Gastrocnemius medialis (tissue), 4 donors: ENCODE measurements at regions of chr10 and their contacts with region 1.

Region 1: DNA sequence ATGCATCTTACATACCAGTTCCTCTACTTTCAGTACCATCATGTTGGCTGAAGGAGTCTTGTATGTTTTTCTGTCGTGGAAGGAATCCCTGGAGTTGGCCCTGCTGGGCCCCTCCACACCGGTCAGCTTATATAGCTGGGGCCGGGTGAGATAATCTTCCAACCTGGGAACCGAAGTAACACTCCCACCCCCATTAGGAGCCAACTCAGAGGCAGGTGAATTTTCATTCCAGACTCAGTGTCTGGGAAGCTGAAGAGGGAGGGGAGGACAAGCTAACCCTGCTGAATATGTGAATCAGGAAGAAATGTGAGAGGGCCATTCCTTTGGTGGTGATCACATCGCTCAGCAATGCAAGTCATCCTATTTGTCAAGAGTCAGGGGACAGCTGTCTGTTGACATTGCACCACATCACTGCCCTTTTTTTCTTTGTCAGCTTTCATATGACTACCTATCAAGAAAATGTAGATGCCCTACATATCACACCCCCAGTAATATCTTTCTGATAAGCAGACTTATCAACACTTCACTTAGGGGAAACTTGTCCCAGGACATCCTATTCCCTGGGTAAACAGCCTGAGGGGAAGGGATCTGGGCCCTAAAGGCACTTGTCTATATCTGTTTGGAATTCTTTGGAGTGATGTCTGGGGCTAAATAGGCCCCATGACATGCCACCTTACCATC is at the start of gene ANKRD1:
- DNase-seq: peak; percentile 69 to 88
- ATAC-seq: peak; percentile 94 to 95
- H3K4me3 ChIP-seq: peak within 1 kb of the TSS in 3 of 4 donors; percentile 26 to 43 (median 36)
- H3K27ac ChIP-seq: peak within 1 kb of the TSS; percentile 78 to 87 (median 84)
- H3K4me1 ChIP-seq: peaks cover 47 to 49% of the 10 kb centered on the region in 2 donors
- H3K27me3 ChIP-seq: no peaks in the 10 kb centered on the region
- CTCF ChIP-seq: no peak
- POLR2A ChIP-seq: peak in 1 of 2 donors; percentile 40
- total RNA-seq, gene ANKRD1: 18.6 to 168 (median 98.5) TPM

Region 2: DNA sequence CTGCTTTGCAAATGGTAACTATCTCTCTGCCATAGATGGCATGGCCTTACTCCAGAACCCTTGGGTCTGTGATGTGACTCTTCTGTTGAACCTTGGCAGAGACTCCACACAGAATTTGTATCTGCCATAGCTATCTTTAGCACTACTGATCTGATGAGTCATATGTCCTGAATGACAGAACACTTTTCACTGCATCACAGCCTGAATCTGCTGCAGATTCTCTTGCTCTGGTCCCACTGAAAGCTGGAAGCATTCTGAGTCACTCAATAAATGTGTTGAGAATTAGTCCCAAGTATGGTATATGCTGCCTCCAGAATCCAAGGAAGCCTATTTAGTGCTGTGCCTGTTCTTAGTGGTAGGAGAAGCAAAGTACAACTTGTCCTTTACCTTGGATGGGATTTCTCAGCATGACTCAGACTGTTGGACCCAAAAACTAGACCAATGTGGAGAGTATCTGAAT is 39.3 kb after region 1 on chr10:
- in situ Hi-C with region 1: loop called in 1 of 4 experiments (anchors 10 kb)
- intact Hi-C with region 1: loop called (anchors 1 kb)
- DNase-seq: peak; percentile 49 to 69
- ATAC-seq: peak; percentile 94
- H3K4me3 ChIP-seq: no peak overlapping the region
- H3K27ac ChIP-seq: peak overlapping the region; percentile 72 to 89 (median 86)
- H3K4me1 ChIP-seq: peaks cover 29 to 31% of the 10 kb centered on the region in 2 donors
- H3K27me3 ChIP-seq: no peaks in the 10 kb centered on the region
- CTCF ChIP-seq: peak in 1 of 5 experiments; percentile 39
- POLR2A ChIP-seq: no peak